CD8-positive, alpha-beta T cell (primary cell): ENCODE measurements at regions of chr11 and their contacts with region 1.

Region 1: GRCh38 chr11:2377511-2378443 is 667 bp downstream of the CD81 start:
- DNase-seq: peak in 8 of 9 experiments; percentile 31 to 77 (median 62)
- ATAC-seq: peak; percentile 59
- H3K4me3 ChIP-seq: peak overlapping the region; percentile 66 to 91
- H3K4me3 Mint-ChIP-seq: peak overlapping the region; percentile 83
- H3K27ac ChIP-seq: peak overlapping the region; percentile 63 to 68
- H3K27ac Mint-ChIP-seq: peak overlapping the region; percentile 79
- H3K4me1 ChIP-seq: peaks cover 36% of the 10 kb centered on the region
- H3K4me1 Mint-ChIP-seq: peaks cover 38% of the 10 kb centered on the region
- H3K27me3 ChIP-seq: no peaks in the 10 kb centered on the region
- H3K27me3 Mint-ChIP-seq: no peaks in the 10 kb centered on the region
- CTCF ChIP-seq: no peak

Region 2: DNA sequence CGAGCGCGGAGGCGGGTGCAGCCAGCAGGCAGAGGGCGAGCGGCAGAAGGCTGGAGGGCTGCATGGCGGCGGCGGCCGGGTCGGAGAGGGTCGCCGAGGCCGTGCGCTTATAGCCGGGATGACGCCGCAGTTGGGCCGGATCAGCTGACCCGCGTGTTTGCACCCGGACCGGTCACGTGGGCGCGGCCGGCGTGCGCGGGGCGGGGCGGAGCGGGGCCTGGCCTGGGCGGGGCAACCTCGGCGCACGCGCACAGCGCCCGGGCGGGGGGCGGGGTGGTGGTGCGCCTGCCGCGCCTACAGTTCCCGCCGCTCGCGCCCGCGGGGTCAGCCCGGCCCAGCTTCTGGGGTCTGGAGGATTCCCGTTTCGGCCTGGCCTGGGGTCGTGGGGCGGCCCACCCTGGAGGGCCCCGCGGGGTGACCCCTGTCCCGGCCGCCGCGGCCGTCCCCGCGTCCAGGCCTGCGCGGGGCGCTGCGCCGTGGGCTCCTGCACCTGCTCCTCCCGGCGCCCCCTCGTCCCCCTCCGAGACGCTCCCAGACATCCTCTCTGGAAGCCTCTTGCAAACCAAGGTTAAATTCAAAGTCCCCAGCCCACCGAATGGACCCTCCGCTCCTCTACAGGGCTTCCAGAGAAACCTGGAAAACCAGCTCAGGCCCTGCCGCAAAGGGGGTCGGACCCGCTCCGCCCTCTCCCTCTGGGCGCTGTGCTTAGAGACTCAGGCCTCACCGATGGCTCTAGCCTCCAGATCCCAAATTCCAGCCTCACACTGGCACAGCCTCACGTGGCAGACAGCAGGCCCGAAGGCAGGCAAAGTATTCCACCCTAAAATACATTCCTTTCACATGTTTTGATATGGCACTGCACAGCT is 613.7 kb before region 1 on chr11 and contains the start of gene CTSD:
- CTCF ChIA-PET with region 1: no interaction called
- POLR2A ChIA-PET with region 1: no interaction called
- intact Hi-C with region 1: loop called in 1 of 2 experiments (anchors 5 kb)
- DNase-seq: peak; percentile 69 to 95 (median 88)
- ATAC-seq: peak; percentile 87
- H3K4me3 ChIP-seq: peak within 1 kb of the TSS; percentile 66 to 85
- H3K4me3 Mint-ChIP-seq: peak within 1 kb of the TSS; percentile 87
- H3K27ac ChIP-seq: peak within 1 kb of the TSS; percentile 45 to 62
- H3K27ac Mint-ChIP-seq: peak within 1 kb of the TSS; percentile 86
- H3K4me1 ChIP-seq: peaks cover 49% of the 10 kb centered on the region
- H3K4me1 Mint-ChIP-seq: peaks cover 35% of the 10 kb centered on the region
- H3K27me3 ChIP-seq: no peaks in the 10 kb centered on the region
- H3K27me3 Mint-ChIP-seq: no peaks in the 10 kb centered on the region
- CTCF ChIP-seq: no peak
- total RNA-seq, gene CTSD: 54.3 to 57.9 TPM

Region 3: GRCh38 chr11:2092956-2093412 is 284.8 kb before region 1 on chr11:
- CTCF ChIA-PET with region 1: no interaction called
- POLR2A ChIA-PET with region 1: no interaction called
- intact Hi-C with region 1: no loop called
- DNase-seq: peak; percentile 49 to 86 (median 75)
- ATAC-seq: peak; percentile 79
- H3K4me3 ChIP-seq: no peak overlapping the region
- H3K4me3 Mint-ChIP-seq: no peak overlapping the region
- H3K27ac ChIP-seq: no peak overlapping the region
- H3K27ac Mint-ChIP-seq: no peak overlapping the region
- H3K4me1 ChIP-seq: peaks cover 12% of the 10 kb centered on the region
- H3K4me1 Mint-ChIP-seq: peaks cover 4% of the 10 kb centered on the region
- H3K27me3 ChIP-seq: peaks cover 0 to 9% of the 10 kb centered on the region in 2 experiments
- H3K27me3 Mint-ChIP-seq: peaks cover 11% of the 10 kb centered on the region
- CTCF ChIP-seq: no peak

Region 4: GRCh38 chr11:2298795-2299761 is 78.7 kb before region 1 on chr11:
- CTCF ChIA-PET with region 1: interaction called, 12 read pairs
- POLR2A ChIA-PET with region 1: interaction called, 4 read pairs
- intact Hi-C with region 1: loop called in 1 of 2 experiments (anchors 2 kb)
- DNase-seq: peak in 6 of 9 experiments; percentile 45 to 75 (median 66)
- ATAC-seq: peak; percentile 51
- H3K4me3 ChIP-seq: peak overlapping the region; percentile 43 to 85
- H3K4me3 Mint-ChIP-seq: peak overlapping the region; percentile 90
- H3K27ac ChIP-seq: peak overlapping the region; percentile 80 to 81
- H3K27ac Mint-ChIP-seq: peak overlapping the region; percentile 92
- H3K4me1 ChIP-seq: peaks cover 47% of the 10 kb centered on the region
- H3K4me1 Mint-ChIP-seq: peaks cover 64% of the 10 kb centered on the region
- H3K27me3 ChIP-seq: no peaks in the 10 kb centered on the region
- H3K27me3 Mint-ChIP-seq: no peaks in the 10 kb centered on the region
- CTCF ChIP-seq: no peak

Region 5: GRCh38 chr11:2305140-2305840 is 72.5 kb before region 1 on chr11:
- CTCF ChIA-PET with region 1: interaction called, 12 read pairs
- POLR2A ChIA-PET with region 1: interaction called, 4 read pairs
- intact Hi-C with region 1: loop called (anchors 1 to 2 kb)
- DNase-seq: peak; percentile 67 to 93 (median 86)
- ATAC-seq: peak; percentile 52
- H3K4me3 ChIP-seq: peak overlapping the region; percentile 82 to 83
- H3K4me3 Mint-ChIP-seq: peak overlapping the region; percentile 91
- H3K27ac ChIP-seq: peak overlapping the region; percentile 48 to 61
- H3K27ac Mint-ChIP-seq: peak overlapping the region; percentile 86
- H3K4me1 ChIP-seq: peaks cover 56% of the 10 kb centered on the region
- H3K4me1 Mint-ChIP-seq: peaks cover 51% of the 10 kb centered on the region
- H3K27me3 ChIP-seq: no peaks in the 10 kb centered on the region
- H3K27me3 Mint-ChIP-seq: no peaks in the 10 kb centered on the region
- CTCF ChIP-seq: peak; percentile 78

Region 6: GRCh38 chr11:2314525-2315394 is 63.0 kb before region 1 on chr11:
- CTCF ChIA-PET with region 1: no interaction called
- POLR2A ChIA-PET with region 1: no interaction called
- intact Hi-C with region 1: loop called in 1 of 2 experiments (anchors 5 kb)
- DNase-seq: peak in 1 of 9 experiments; percentile 7
- ATAC-seq: no peak
- H3K4me3 ChIP-seq: no peak overlapping the region
- H3K4me3 Mint-ChIP-seq: no peak overlapping the region
- H3K27ac ChIP-seq: no peak overlapping the region
- H3K27ac Mint-ChIP-seq: peak overlapping the region; percentile 60
- H3K4me1 ChIP-seq: peaks cover 41% of the 10 kb centered on the region
- H3K4me1 Mint-ChIP-seq: peaks cover 25% of the 10 kb centered on the region
- H3K27me3 ChIP-seq: no peaks in the 10 kb centered on the region
- H3K27me3 Mint-ChIP-seq: no peaks in the 10 kb centered on the region
- CTCF ChIP-seq: no peak

Region 7: DNA sequence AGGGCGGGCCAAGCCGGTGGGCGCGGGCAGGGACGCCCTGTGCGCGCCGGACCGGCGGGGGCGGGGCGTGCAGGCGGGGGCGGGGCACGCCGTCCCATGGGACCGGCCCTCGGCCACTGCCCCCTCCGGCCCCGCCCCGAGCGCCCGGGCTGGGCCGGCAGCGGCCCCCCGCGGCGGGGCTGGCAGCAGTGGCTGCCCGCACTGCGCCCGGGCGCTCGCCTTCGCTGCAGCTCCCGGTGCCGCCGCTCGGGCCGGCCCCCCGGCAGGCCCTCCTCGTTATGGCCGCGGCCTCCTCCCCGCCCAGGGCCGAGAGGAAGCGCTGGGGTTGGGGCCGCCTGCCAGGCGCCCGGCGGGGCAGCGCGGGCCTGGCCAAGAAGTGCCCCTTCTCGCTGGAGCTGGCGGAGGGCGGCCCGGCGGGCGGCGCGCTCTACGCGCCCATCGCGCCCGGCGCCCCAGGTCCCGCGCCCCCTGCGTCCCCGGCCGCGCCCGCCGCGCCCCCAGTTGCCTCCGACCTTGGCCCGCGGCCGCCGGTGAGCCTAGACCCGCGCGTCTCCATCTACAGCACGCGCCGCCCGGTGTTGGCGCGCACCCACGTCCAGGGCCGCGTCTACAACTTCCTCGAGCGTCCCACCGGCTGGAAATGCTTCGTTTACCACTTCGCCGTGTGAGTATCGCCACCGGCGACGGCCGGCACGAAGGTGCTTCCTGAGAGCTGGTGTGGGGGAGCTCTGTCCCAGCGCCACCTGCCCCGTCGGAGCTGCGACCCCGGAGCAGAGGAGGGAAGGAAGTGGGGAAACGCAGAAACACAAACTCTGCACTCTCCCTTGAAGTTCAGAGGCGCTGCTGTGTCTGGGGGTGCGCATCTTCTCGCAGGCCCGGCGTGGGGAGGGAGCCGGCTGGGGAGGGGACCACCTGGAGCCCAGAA is 67.3 kb after region 1 on chr11 and contains the start of gene KCNQ1:
- CTCF ChIA-PET with region 1: no interaction called
- POLR2A ChIA-PET with region 1: no interaction called
- intact Hi-C with region 1: loop called in 1 of 2 experiments (anchors 2 kb)
- DNase-seq: peak in 4 of 9 experiments; percentile 29 to 68 (median 65)
- ATAC-seq: peak; percentile 41
- H3K4me3 ChIP-seq: peak within 1 kb of the TSS; percentile 53 to 56
- H3K4me3 Mint-ChIP-seq: peak within 1 kb of the TSS; percentile 91
- H3K27ac ChIP-seq: peak within 1 kb of the TSS in 1 of 2 experiments; percentile 35
- H3K27ac Mint-ChIP-seq: peak within 1 kb of the TSS; percentile 88
- H3K4me1 ChIP-seq: peaks cover 51% of the 10 kb centered on the region
- H3K4me1 Mint-ChIP-seq: peaks cover 41% of the 10 kb centered on the region
- H3K27me3 ChIP-seq: peaks cover 0 to 25% of the 10 kb centered on the region in 2 experiments
- H3K27me3 Mint-ChIP-seq: no peaks in the 10 kb centered on the region
- CTCF ChIP-seq: no peak
- total RNA-seq, gene KCNQ1: 24.9 to 25.7 TPM

Region 8: GRCh38 chr11:3057069-3057963 is 679.5 kb after region 1 on chr11 and contains the start of gene CARS1:
- CTCF ChIA-PET with region 1: no interaction called
- POLR2A ChIA-PET with region 1: no interaction called
- intact Hi-C with region 1: loop called in 1 of 2 experiments (anchors 5 kb)
- DNase-seq: peak; percentile 79 to 96 (median 92)
- ATAC-seq: peak; percentile 97
- H3K4me3 ChIP-seq: peak within 1 kb of the TSS; percentile 88 to 93
- H3K4me3 Mint-ChIP-seq: peak within 1 kb of the TSS; percentile 87
- H3K27ac ChIP-seq: peak within 1 kb of the TSS; percentile 73 to 76
- H3K27ac Mint-ChIP-seq: peak within 1 kb of the TSS; percentile 79
- H3K4me1 ChIP-seq: peaks cover 17% of the 10 kb centered on the region
- H3K4me1 Mint-ChIP-seq: peaks cover 38% of the 10 kb centered on the region
- H3K27me3 ChIP-seq: no peaks in the 10 kb centered on the region
- H3K27me3 Mint-ChIP-seq: no peaks in the 10 kb centered on the region
- CTCF ChIP-seq: no peak
- total RNA-seq, gene CARS1: 34.2 to 34.7 TPM